ENCODE measurements at regions of chr19 and their contacts with region 1.

Region 1: GRCh38 chr19:13150187-13150930 is at the starts of genes IER2 and STX10:
- DNase-seq: peak; percentile 84 to 93 (median 92)
- ATAC-seq: peak; percentile 72
- H3K4me3 ChIP-seq: peak within 1 kb of the TSS; percentile 96
- H3K4me3 Mint-ChIP-seq: peak within 1 kb of the TSS; percentile 94 to 100 (median 98)
- H3K27ac ChIP-seq: peak within 1 kb of the TSS; percentile 96
- H3K27ac Mint-ChIP-seq: peak within 1 kb of the TSS; percentile 95 to 99 (median 97)
- H3K4me1 ChIP-seq: peaks cover 9 to 11% of the 10 kb centered on the region in 2 donors
- H3K4me1 Mint-ChIP-seq: peaks cover 6 to 42% (median 18%) of the 10 kb centered on the region in 7 donors
- H3K27me3 ChIP-seq: no peaks in the 10 kb centered on the region
- H3K27me3 Mint-ChIP-seq: peaks cover 0 to 17% (median 0%) of the 10 kb centered on the region in 5 donors
- total RNA-seq, gene IER2: 135 to 558 (median 246) TPM
- total RNA-seq, gene STX10: 42.6 to 76.2 (median 68.5) TPM

Region 2: GRCh38 chr19:12782229-12783028 is 367.9 kb before region 1 on chr19:
- CTCF ChIA-PET with region 1: no interaction called
- POLR2A ChIA-PET with region 1: no interaction called
- intact Hi-C with region 1: loop called in 1 of 2 experiments (anchors 2 kb)
- DNase-seq: peak; percentile 93 to 99 (median 98)
- ATAC-seq: peak; percentile 81
- H3K4me3 ChIP-seq: peak overlapping the region; percentile 58
- H3K4me3 Mint-ChIP-seq: peak overlapping the region; percentile 76 to 96 (median 86)
- H3K27ac ChIP-seq: peak overlapping the region; percentile 98
- H3K27ac Mint-ChIP-seq: peak overlapping the region in 4 of 9 donors; percentile 88 to 99 (median 93)
- H3K4me1 ChIP-seq: peaks cover 33 to 58% of the 10 kb centered on the region in 2 donors
- H3K4me1 Mint-ChIP-seq: peaks cover 14 to 42% (median 33%) of the 10 kb centered on the region in 7 donors
- H3K27me3 ChIP-seq: no peaks in the 10 kb centered on the region
- H3K27me3 Mint-ChIP-seq: no peaks in the 10 kb centered on the region

Region 3: GRCh38 chr19:13117772-13118423 is 32.5 kb before region 1 on chr19 and contains the start of gene NACC1:
- CTCF ChIA-PET with region 1: interaction called, 4 read pairs
- POLR2A ChIA-PET with region 1: interaction called, 36 read pairs
- intact Hi-C with region 1: loop called (anchors 1 kb)
- DNase-seq: peak; percentile 81 to 94 (median 89)
- ATAC-seq: peak; percentile 95
- H3K4me3 ChIP-seq: peak within 1 kb of the TSS; percentile 97
- H3K4me3 Mint-ChIP-seq: peak within 1 kb of the TSS; percentile 86 to 99 (median 97)
- H3K27ac ChIP-seq: peak within 1 kb of the TSS; percentile 84
- H3K27ac Mint-ChIP-seq: peak within 1 kb of the TSS; percentile 85 to 96 (median 91)
- H3K4me1 ChIP-seq: peaks cover 25 to 30% of the 10 kb centered on the region in 2 donors
- H3K4me1 Mint-ChIP-seq: peaks cover 16 to 64% (median 49%) of the 10 kb centered on the region in 7 donors
- H3K27me3 ChIP-seq: no peaks in the 10 kb centered on the region
- H3K27me3 Mint-ChIP-seq: no peaks in the 10 kb centered on the region
- total RNA-seq, gene NACC1: 18.0 to 72.7 (median 22.4) TPM

Region 4: GRCh38 chr19:13195678-13196077 is 45.3 kb after region 1 on chr19:
- CTCF ChIA-PET with region 1: interaction called, 12 read pairs
- POLR2A ChIA-PET with region 1: interaction called, 63 read pairs
- intact Hi-C with region 1: loop called in 1 of 2 experiments (anchors 1 kb)
- DNase-seq: peak in 5 of 9 donors; percentile 26 to 42 (median 28)
- ATAC-seq: no peak
- H3K4me3 ChIP-seq: no peak overlapping the region
- H3K4me3 Mint-ChIP-seq: peak overlapping the region in 3 of 10 donors; percentile 7 to 24 (median 17)
- H3K27ac ChIP-seq: no peak overlapping the region
- H3K27ac Mint-ChIP-seq: peak overlapping the region in 6 of 9 donors; percentile 39 to 79 (median 72)
- H3K4me1 ChIP-seq: peaks cover 6 to 33% of the 10 kb centered on the region in 2 donors
- H3K4me1 Mint-ChIP-seq: peaks cover 5 to 31% (median 26%) of the 10 kb centered on the region in 7 donors
- H3K27me3 ChIP-seq: no peaks in the 10 kb centered on the region
- H3K27me3 Mint-ChIP-seq: no peaks in the 10 kb centered on the region

Region 5: DNA sequence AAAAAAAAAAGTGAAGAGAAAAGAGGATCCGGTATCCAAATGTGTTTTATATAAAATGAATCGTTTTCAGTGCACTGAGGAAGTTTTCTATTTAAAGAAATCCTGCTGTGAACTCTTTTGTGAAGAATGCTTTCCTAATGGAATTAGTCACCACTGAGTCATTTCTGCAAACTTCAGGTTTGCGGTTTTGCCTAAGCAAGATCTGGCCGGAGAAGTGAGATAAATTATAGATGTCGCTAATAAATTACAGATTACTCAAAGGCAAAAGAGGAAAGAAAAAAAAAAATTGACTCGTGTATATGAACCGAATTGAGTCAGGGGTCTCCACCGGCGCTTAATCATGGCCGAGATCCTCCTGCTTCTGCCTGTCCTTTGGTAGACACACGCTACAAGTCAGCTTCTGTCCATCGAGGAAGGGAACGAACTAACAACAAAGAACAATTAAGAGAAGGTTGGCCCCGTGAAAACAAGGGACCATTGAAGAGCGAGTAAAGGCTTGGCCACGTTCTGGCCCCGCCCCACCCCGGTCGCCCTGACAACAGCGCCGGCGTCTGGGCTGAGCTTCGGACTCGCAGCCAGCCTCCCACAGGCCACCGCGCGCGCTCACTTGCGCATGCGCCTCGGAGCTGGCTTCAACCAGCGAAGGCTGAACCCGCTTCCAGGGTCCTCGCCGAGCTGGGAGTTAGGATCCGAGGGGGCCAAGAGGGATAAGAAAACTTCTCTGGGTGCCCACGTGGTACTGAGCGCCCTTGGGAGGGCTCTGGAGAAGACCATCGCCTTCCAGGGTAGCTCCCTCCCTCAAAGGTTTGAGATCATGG is 581.0 kb after region 1 on chr19:
- CTCF ChIA-PET with region 1: no interaction called
- POLR2A ChIA-PET with region 1: no interaction called
- intact Hi-C with region 1: loop called in 1 of 2 experiments (anchors 10 kb)
- DNase-seq: peak; percentile 85 to 95 (median 91)
- ATAC-seq: peak; percentile 100
- H3K4me3 ChIP-seq: peak overlapping the region; percentile 89
- H3K4me3 Mint-ChIP-seq: peak overlapping the region; percentile 82 to 95 (median 92)
- H3K27ac ChIP-seq: peak overlapping the region; percentile 75
- H3K27ac Mint-ChIP-seq: peak overlapping the region; percentile 68 to 95 (median 88)
- H3K4me1 ChIP-seq: peaks cover 3 to 7% of the 10 kb centered on the region in 2 donors
- H3K4me1 Mint-ChIP-seq: peaks cover 6 to 19% (median 11%) of the 10 kb centered on the region in 7 donors
- H3K27me3 ChIP-seq: no peaks in the 10 kb centered on the region
- H3K27me3 Mint-ChIP-seq: no peaks in the 10 kb centered on the region

Region 6: GRCh38 chr19:14366498-14366915 is 1216.1 kb after region 1 on chr19:
- CTCF ChIA-PET with region 1: no interaction called
- POLR2A ChIA-PET with region 1: no interaction called
- intact Hi-C with region 1: loop called in 1 of 2 experiments (anchors 10 kb)
- DNase-seq: peak; percentile 76 to 96 (median 93)
- ATAC-seq: peak; percentile 68
- H3K4me3 ChIP-seq: peak overlapping the region; percentile 44
- H3K4me3 Mint-ChIP-seq: peak overlapping the region; percentile 54 to 90 (median 78)
- H3K27ac ChIP-seq: peak overlapping the region; percentile 99
- H3K27ac Mint-ChIP-seq: peak overlapping the region; percentile 93 to 100 (median 98)
- H3K4me1 ChIP-seq: peaks cover 55 to 80% of the 10 kb centered on the region in 2 donors
- H3K4me1 Mint-ChIP-seq: peaks cover 53 to 81% (median 65%) of the 10 kb centered on the region in 7 donors
- H3K27me3 ChIP-seq: no peaks in the 10 kb centered on the region
- H3K27me3 Mint-ChIP-seq: no peaks in the 10 kb centered on the region

Measured in naive thymus-derived CD4-positive, alpha-beta T cell (primary cell).